PC-9 (cell line): ENCODE measurements at regions of chr12 and their contacts with region 1.

Region 1: GRCh38 chr12:121697098-121697698 is 15.4 kb upstream of the TMEM120B start:
- DNase-seq: peak in 1 of 2 experiments; percentile 13
- H3K4me3 ChIP-seq: no peak overlapping the region
- H3K27ac ChIP-seq: no peak overlapping the region
- H3K4me1 ChIP-seq: no peaks in the 10 kb centered on the region; the same call in 1 of the 2 replicates
- H3K27me3 ChIP-seq: no peaks in the 10 kb centered on the region
- CTCF ChIP-seq: peak; percentile 70

Region 2: DNA sequence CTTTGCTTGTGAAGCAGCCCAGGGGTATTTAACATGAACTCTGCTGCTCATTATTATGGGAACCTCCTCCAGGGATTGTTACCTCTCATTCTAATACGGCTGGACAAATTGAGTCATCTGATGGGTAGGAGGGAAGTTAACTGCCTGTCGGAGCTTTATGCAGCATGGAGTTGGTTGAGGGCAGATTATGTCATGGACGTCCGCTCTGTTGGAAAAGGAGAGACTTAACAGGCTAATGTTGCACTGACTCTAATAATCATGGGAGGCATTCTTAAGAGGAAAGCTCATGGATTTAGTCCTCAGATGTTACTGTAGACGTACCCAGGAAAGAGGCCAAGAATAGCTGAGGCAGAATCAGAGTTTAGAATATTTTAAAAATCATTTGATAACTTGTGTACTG is 1125.9 kb before region 1 on chr12:
- CTCF ChIA-PET with region 1: no interaction called
- POLR2A ChIA-PET with region 1: no interaction called
- intact Hi-C with region 1: no loop called
- DNase-seq: no peak
- H3K4me3 ChIP-seq: no peak overlapping the region
- H3K27ac ChIP-seq: no peak overlapping the region
- H3K4me1 ChIP-seq: no peaks in the 10 kb centered on the region
- H3K27me3 ChIP-seq: no peaks in the 10 kb centered on the region
- CTCF ChIP-seq: no peak

Region 3: GRCh38 chr12:121483949-121484348 is 213.2 kb before region 1 on chr12:
- CTCF ChIA-PET with region 1: no interaction called
- POLR2A ChIA-PET with region 1: no interaction called
- intact Hi-C with region 1: no loop called
- DNase-seq: no peak
- H3K4me3 ChIP-seq: no peak overlapping the region
- H3K27ac ChIP-seq: no peak overlapping the region
- H3K4me1 ChIP-seq: no peaks in the 10 kb centered on the region
- H3K27me3 ChIP-seq: no peaks in the 10 kb centered on the region
- CTCF ChIP-seq: no peak

Region 4: GRCh38 chr12:121608301-121608700 is 88.9 kb before region 1 on chr12:
- CTCF ChIA-PET with region 1: no interaction called
- POLR2A ChIA-PET with region 1: no interaction called
- intact Hi-C with region 1: no loop called
- DNase-seq: no peak
- H3K4me3 ChIP-seq: no peak overlapping the region
- H3K27ac ChIP-seq: no peak overlapping the region
- H3K4me1 ChIP-seq: no peaks in the 10 kb centered on the region
- H3K27me3 ChIP-seq: no peaks in the 10 kb centered on the region
- CTCF ChIP-seq: no peak

Region 5: GRCh38 chr12:121712461-121713256 is 15.5 kb after region 1 on chr12 and contains the start of gene TMEM120B:
- CTCF ChIA-PET with region 1: interaction called, 10 read pairs
- POLR2A ChIA-PET with region 1: no interaction called
- intact Hi-C with region 1: no loop called
- DNase-seq: peak; percentile 41 to 84
- H3K4me3 ChIP-seq: peak within 1 kb of the TSS; percentile 77
- H3K27ac ChIP-seq: peak within 1 kb of the TSS; percentile 40; the same call in 1 of the 2 replicates
- H3K4me1 ChIP-seq: peaks cover 35% of the 10 kb centered on the region
- H3K27me3 ChIP-seq: no peaks in the 10 kb centered on the region
- CTCF ChIP-seq: no peak
- total RNA-seq, gene TMEM120B: 10.3 and 12.4 TPM in 2 replicates

Region 6: GRCh38 chr12:121718667-121719239 is 21.6 kb after region 1 on chr12:
- CTCF ChIA-PET with region 1: interaction called, 11 read pairs
- POLR2A ChIA-PET with region 1: no interaction called
- intact Hi-C with region 1: no loop called
- DNase-seq: no peak
- H3K4me3 ChIP-seq: no peak overlapping the region
- H3K27ac ChIP-seq: no peak overlapping the region
- H3K4me1 ChIP-seq: peaks cover 23% of the 10 kb centered on the region
- H3K27me3 ChIP-seq: no peaks in the 10 kb centered on the region
- CTCF ChIP-seq: no peak

Region 7: DNA sequence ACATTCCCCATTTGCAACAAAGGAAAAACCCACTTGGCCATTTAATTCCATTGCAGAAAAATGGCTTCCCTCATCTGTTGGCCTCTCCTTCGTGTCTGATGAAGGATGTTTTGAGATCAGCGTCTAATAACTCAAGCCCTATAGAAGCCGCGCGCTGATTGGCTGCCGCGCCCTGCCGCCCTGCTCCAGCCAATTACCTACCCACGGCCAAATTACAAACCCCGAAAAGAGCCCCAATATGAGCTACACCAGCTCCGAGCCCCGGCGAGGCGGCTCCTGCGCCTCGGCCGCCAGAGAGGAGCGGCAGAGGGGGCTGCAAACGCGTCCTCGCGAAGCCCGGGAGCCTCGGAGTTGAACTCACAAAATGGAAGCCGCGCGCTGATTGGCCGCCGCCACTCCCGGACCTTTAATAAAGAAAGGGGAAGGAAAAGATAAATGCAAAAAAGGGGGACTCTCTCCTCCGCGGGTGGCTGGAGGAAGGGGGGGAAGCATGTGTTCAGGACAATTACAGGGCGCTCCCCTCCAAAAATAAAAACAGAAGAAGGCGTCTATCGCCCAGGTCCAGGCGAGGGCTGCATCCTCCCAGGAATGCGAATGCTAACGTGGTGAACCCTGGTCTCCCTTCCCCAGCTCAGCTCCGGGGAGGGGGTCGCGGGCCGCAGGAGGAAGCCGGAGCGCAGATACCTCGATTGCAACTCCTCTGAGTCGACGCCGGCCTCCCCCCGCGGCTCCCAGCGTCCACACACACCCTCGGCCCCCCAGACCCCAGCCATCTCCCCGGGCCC is 105.8 kb after region 1 on chr12:
- CTCF ChIA-PET with region 1: no interaction called
- POLR2A ChIA-PET with region 1: interaction called, 18 read pairs
- intact Hi-C with region 1: no loop called
- DNase-seq: peak; percentile 88 to 92
- H3K4me3 ChIP-seq: peak overlapping the region; percentile 83
- H3K27ac ChIP-seq: peak overlapping the region; percentile 100
- H3K4me1 ChIP-seq: peaks cover 31% of the 10 kb centered on the region
- H3K27me3 ChIP-seq: no peaks in the 10 kb centered on the region
- CTCF ChIP-seq: no peak